GM12878 (cell line): ENCODE measurements at regions of chr17 and their contacts with region 1.

Region 1: GRCh38 chr17:28371245-28372202 is at the start of gene SARM1:
- DNase-seq: peak; percentile 63
- ATAC-seq: peak; percentile 97
- H3K4me3 ChIP-seq: peak within 1 kb of the TSS; percentile 88
- H3K27ac ChIP-seq: no peak within 1 kb of the TSS
- H3K4me1 ChIP-seq: peaks cover 7% of the 10 kb centered on the region
- H3K27me3 ChIP-seq: no peaks in the 10 kb centered on the region
- CTCF ChIP-seq: no peak
- EP300 ChIP-seq: no peak
- POLR2A ChIP-seq: peak; percentile 76
- RAD21 ChIP-seq: no peak
- polyA plus RNA-seq, gene SARM1: 0.56 to 1.5 TPM

Region 2: GRCh38 chr17:28433721-28434120 is 62.2 kb after region 1 on chr17:
- CTCF ChIA-PET with region 1: no interaction called
- POLR2A ChIA-PET with region 1: interaction called, 4 read pairs
- RAD21 ChIA-PET with region 1: no interaction called
- SMC1A ChIA-PET with region 1: no interaction called
- in situ Hi-C with region 1: no loop called
- intact Hi-C with region 1: loop called (anchors 10 kb)
- DNase-seq: no peak
- ATAC-seq: no peak
- H3K4me3 ChIP-seq: no peak overlapping the region
- H3K27ac ChIP-seq: no peak overlapping the region
- H3K4me1 ChIP-seq: no peaks in the 10 kb centered on the region
- H3K27me3 ChIP-seq: no peaks in the 10 kb centered on the region
- CTCF ChIP-seq: no peak
- EP300 ChIP-seq: no peak
- POLR2A ChIP-seq: no peak
- RAD21 ChIP-seq: no peak